ENCODE measurements at regions of chr1 and their contacts with region 1.

Region 1: GRCh38 chr1:6041432-6042062 is 4.1 kb upstream of the KCNAB2 start:
- DNase-seq: peak in 1 of 2 donors; percentile 40
- ATAC-seq: peak in 5 of 8 donors; percentile 39 to 65 (median 42)
- H3K4me3 ChIP-seq: no peak overlapping the region
- H3K27ac ChIP-seq: no peak overlapping the region
- H3K4me1 ChIP-seq: peaks cover 0 to 15% (median 0%) of the 10 kb centered on the region in 9 donors
- H3K27me3 ChIP-seq: no peaks in the 10 kb centered on the region
- CTCF ChIP-seq: peak in 8 of 9 donors; percentile 21 to 66 (median 56)

Region 2: GRCh38 chr1:6171548-6172119 is 130.1 kb after region 1 on chr1:
- intact Hi-C with region 1: loop called in 1 of 10 experiments (anchors 10 kb)
- DNase-seq: no peak
- ATAC-seq: peak in 5 of 8 donors; percentile 25 to 56 (median 33)
- H3K4me3 ChIP-seq: no peak overlapping the region
- H3K27ac ChIP-seq: no peak overlapping the region
- H3K4me1 ChIP-seq: no peaks in the 10 kb centered on the region
- H3K27me3 ChIP-seq: peaks cover 0 to 74% (median 43%) of the 10 kb centered on the region in 7 donors
- CTCF ChIP-seq: peak in 6 of 9 donors; percentile 17 to 40 (median 34)

Region 3: DNA sequence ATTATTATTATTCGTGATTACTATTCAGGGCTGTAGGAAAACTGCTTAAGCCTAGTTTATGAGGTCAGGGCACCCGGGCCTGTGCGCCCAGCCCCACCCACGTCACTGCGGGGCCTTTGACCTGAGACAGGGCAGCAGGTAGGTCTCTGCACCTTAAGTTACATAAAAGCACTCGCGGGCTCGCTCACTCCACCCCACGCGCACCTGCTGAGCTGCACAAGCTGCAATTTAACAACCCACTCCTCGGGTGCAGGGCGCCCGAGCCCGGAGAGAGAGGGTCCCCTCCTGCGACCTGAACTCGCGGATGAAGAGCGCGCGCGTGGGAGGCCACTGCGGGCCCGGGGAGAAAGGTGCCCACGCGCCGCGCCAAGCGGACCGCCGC is 193.7 kb after region 1 on chr1:
- intact Hi-C with region 1: loop called in 1 of 10 experiments (anchors 5 kb)
- DNase-seq: no peak
- ATAC-seq: peak in 1 of 8 donors; percentile 3
- H3K4me3 ChIP-seq: peak overlapping the region; percentile 50 to 96 (median 82)
- H3K27ac ChIP-seq: peak overlapping the region; percentile 27 to 87 (median 74)
- H3K4me1 ChIP-seq: peaks cover 8 to 45% (median 34%) of the 10 kb centered on the region in 9 donors
- H3K27me3 ChIP-seq: peaks cover under 1 to 21% (median 11%) of the 10 kb centered on the region in 7 donors
- CTCF ChIP-seq: no peak

Region 4: GRCh38 chr1:6343506-6344405 is 302.2 kb after region 1 on chr1:
- intact Hi-C with region 1: loop called in 1 of 10 experiments (anchors 10 kb)
- DNase-seq: peak; percentile 61
- ATAC-seq: peak; percentile 72 to 85 (median 78)
- H3K4me3 ChIP-seq: no peak overlapping the region
- H3K27ac ChIP-seq: no peak overlapping the region
- H3K4me1 ChIP-seq: peaks cover 0 to 13% (median 7%) of the 10 kb centered on the region in 9 donors
- H3K27me3 ChIP-seq: no peaks in the 10 kb centered on the region
- CTCF ChIP-seq: peak; percentile 67 to 90 (median 83)

Measured in heart right ventricle (tissue), 16 donors.